ENCODE measurements at regions of chr13 and their contacts with region 1.

Region 1: GRCh38 chr13:97030705-97031452 is 36.6 kb upstream of the OXGR1 start:
- DNase-seq: no peak
- H3K4me3 ChIP-seq: no peak overlapping the region
- CTCF ChIP-seq: no peak

Region 2: DNA sequence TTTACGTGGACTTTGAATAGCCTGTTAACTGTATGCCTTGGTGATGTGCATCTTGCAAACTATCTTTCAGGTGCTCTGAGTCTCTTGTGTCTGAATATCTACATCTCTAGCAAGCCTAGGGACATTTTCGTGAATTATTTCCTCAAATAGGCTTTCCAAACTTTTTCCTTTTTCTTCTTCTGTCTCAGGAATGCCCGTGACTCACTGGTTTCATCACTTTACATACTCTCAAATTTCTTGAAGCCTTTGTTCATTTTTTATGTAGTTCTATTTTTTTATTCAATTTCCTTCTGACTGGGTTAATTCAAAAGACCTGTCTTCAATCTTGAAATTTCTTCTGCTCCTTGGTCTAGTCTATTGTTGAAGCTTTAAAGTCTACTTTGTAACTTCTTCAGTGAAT is 368.8 kb before region 1 on chr13:
- CTCF ChIA-PET with region 1: no interaction called
- POLR2A ChIA-PET with region 1: no interaction called
- DNase-seq: no peak
- H3K4me3 ChIP-seq: no peak overlapping the region
- CTCF ChIP-seq: no peak

Region 3: DNA sequence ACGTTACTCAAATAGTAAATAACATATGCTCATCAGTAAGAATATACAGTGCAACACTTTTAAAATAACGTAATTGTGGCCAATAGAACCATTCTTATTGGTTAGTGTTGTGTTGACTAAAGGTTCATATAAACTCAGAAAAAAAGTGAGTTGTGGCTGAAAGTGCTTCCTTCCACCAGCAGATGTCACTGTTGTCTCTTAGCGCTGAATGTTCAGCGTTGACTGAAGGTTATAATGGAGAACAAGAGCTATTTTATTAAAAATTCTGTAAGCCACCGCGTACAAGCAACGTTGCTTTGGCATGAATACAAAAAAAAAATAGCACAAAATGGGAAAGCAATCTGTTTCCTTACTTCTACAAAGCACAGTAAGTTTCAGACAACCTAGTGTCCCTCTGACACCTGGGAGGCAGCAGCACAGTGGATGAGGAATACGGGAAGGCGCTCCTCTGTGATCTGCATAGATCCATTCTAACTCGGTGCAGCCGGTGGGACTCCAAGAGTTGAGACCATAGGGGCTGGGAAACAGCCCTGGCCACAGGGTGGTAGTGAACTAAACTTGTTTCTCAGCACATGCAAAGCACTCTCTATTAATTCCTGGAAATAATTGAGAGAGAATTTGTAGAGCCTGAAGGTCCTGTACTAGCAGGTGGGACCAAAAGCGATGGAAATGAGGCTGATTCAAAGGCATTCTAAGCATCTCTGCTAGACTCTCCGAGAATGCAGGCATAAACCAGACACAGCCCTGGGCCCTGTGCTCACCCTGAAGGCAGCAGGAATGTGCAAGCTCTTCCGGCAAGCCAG is 12.6 kb before region 1 on chr13:
- CTCF ChIA-PET with region 1: interaction called, 13 read pairs
- POLR2A ChIA-PET with region 1: no interaction called
- DNase-seq: no peak
- H3K4me3 ChIP-seq: no peak overlapping the region
- CTCF ChIP-seq: peak; percentile 77